Cardiac septum (tissue), 1 donor: ENCODE measurements at regions of chr2 and their contacts with region 1.

Region 1: DNA sequence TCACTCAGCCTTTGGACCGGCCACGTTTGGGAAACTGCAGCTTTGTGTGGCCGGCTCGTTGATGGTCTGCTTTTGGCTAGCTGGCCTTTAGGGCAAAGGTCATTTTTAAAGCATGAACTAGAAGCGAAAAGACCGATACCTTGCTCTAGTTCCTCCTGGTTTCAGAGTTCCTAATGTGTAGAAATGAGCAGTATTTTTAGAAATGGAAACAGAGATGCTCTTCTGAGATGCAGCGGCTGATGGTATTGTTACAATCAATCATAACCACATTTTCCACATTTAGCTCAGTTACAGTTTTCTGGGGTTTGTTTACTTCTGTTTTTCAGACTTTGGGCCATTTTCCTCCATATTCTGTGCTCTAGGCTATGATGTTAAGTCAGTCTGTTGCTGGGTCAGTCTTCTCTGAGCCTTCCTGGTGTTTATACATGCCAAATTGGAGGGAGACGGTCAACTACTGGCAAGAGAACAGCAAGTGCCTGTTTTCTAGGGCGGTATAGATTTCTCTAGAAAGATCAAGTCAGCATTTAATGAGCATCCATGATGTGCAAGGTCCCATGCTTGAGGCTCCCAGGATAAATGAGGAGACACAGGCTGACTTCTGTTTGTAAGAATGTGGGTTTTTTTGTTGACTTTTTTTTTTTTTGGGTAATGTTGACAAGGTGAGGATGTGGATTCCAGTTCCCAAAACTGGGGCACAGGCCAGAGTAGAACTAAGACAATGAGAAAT is 28.0 kb downstream of the RNF144A start:
- DNase-seq: no peak

Region 2: GRCh38 chr2:6224267-6224666 is 721.0 kb before region 1 on chr2:
- intact Hi-C with region 1: no loop called
- DNase-seq: no peak

Region 3: GRCh38 chr2:6826081-6826913 is 119.0 kb before region 1 on chr2:
- intact Hi-C with region 1: no loop called
- DNase-seq: no peak

Region 4: GRCh38 chr2:6986301-6987176 is 41.3 kb after region 1 on chr2:
- intact Hi-C with region 1: loop called (anchors 5 kb)
- DNase-seq: no peak